ENCODE measurements at regions of chr16 and their contacts with region 1.

Region 1: DNA sequence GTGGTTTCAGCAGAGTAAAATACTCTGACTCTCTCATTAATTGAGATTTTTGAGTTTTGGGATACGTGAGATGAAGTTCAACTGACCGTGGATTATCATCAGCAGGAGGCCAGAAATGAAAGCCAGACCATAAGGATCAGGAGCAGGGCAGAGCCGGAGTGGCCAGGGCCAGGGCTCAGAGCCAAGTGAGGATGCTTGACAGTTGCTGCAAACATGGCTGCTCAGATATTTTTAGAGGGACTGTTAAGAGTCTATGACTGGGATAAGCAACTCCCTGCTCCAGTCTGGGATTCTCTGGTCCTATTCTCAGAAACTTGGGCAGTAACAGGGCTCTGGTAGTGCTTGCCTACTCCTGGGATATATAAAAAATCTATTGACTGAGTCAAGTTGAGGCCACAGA is 17.6 kb upstream of the CDH13 start:
- DNase-seq: no peak
- H3K4me3 Mint-ChIP-seq: no peak overlapping the region
- H3K27ac Mint-ChIP-seq: no peak overlapping the region
- H3K4me1 Mint-ChIP-seq: peaks cover 5% of the 10 kb centered on the region
- H3K27me3 Mint-ChIP-seq: peaks cover 13% of the 10 kb centered on the region
- CTCF ChIP-seq: no peak

Region 2: GRCh38 chr16:82379551-82379950 is 229.6 kb before region 1 on chr16:
- CTCF ChIA-PET with region 1: no interaction called
- POLR2A ChIA-PET with region 1: no interaction called
- intact Hi-C with region 1: no loop called
- DNase-seq: no peak
- H3K4me3 Mint-ChIP-seq: no peak overlapping the region
- H3K27ac Mint-ChIP-seq: no peak overlapping the region
- H3K4me1 Mint-ChIP-seq: no peaks in the 10 kb centered on the region
- H3K27me3 Mint-ChIP-seq: peaks cover 51% of the 10 kb centered on the region
- CTCF ChIP-seq: no peak

Region 3: GRCh38 chr16:82506692-82507670 is 102.2 kb before region 1 on chr16:
- CTCF ChIA-PET with region 1: no interaction called
- POLR2A ChIA-PET with region 1: no interaction called
- intact Hi-C with region 1: no loop called
- DNase-seq: no peak
- H3K4me3 Mint-ChIP-seq: no peak overlapping the region
- H3K27ac Mint-ChIP-seq: no peak overlapping the region
- H3K4me1 Mint-ChIP-seq: no peaks in the 10 kb centered on the region
- H3K27me3 Mint-ChIP-seq: peaks cover 33% of the 10 kb centered on the region
- CTCF ChIP-seq: no peak

Region 4: DNA sequence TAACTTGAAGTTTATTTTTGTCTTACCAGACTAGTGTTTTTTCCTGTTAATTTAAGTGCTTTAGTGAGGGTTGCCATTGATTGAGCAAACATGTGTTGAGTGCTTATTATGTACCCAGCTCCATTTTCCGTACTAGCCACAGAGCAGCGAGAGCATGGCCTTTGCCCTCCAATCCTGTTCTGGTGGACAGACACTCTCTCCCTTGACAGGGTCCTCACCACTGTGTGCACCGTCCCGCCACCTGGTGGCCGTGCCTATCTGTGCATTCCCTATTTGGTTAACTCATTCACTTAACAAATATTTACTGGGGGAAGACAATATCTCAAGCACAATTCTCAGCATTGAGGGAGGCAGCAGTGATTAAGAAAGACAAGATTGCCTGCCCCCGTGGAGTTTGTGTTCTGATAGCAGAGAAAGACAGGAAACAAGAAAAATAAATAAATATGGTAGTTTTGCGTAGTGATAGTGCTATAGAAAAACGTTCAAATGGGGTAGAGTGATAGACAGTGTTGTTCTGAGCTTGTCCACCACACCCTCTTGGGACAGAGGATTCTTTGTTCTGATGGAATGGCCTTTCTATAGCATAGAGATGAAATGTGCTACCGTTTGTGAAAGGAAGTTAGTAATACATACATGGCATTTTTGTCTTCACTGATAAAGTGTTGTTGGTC is 30.7 kb after region 1 on chr16:
- CTCF ChIA-PET with region 1: interaction called, 35 read pairs
- POLR2A ChIA-PET with region 1: no interaction called
- intact Hi-C with region 1: loop called (anchors 1 kb)
- DNase-seq: peak; percentile 73
- H3K4me3 Mint-ChIP-seq: no peak overlapping the region
- H3K27ac Mint-ChIP-seq: no peak overlapping the region
- H3K4me1 Mint-ChIP-seq: peaks cover 36% of the 10 kb centered on the region
- H3K27me3 Mint-ChIP-seq: no peaks in the 10 kb centered on the region
- CTCF ChIP-seq: peak; percentile 82

Measured in MCF 10A (cell line).